Activated T-helper 2 cell treated with anti-CD3 and anti-CD28 coated beads, Interferon-gamma antibody, Interleukin-2, Interleukin-4, amounts not matched to agents 10 μg/mL and 5 μg/mL and 100 μg/mL, durations not matched to agents 14 hours and 24 hours and 36 hours (primary cell): ENCODE measurements at regions of chr12 and their contacts with region 1.

Region 1: DNA sequence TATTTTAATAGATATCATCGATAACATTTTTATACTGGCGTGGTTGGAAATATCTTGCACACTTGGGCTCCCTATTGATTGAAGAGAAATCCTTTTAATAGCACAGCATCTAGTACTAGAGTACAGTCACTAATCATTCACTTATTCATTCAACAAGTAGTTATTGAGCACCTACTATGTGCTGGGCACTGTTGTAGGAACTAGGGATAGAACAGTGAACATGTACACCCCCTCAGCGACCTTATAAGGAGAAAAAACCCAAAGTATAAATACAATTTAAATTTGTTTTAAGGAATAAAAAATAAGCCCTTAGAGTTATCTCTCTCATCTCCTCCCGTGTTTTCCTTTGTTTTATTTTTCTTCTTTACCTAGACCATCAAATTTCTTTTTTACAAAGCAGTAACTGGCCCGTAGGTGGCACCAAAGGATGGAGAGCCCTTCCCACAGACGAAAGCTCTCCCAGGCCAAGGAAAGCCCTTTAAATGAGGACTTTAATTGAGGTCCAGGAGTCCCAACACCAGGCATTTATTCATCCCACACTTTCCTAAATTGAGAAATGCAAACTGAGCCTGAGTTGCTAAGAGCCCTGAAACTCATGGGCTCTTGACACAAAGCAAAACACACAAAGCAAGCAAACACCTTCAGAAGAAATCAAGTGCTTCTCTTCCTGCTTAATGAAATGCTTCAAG is 29.0 kb downstream of the PEBP1 start:
- DNase-seq: no peak
- H3K4me3 Mint-ChIP-seq: no peak overlapping the region
- H3K27ac Mint-ChIP-seq: peak overlapping the region; percentile 65
- H3K4me1 Mint-ChIP-seq: peaks cover 21% of the 10 kb centered on the region
- H3K27me3 Mint-ChIP-seq: no peaks in the 10 kb centered on the region

Region 2: DNA sequence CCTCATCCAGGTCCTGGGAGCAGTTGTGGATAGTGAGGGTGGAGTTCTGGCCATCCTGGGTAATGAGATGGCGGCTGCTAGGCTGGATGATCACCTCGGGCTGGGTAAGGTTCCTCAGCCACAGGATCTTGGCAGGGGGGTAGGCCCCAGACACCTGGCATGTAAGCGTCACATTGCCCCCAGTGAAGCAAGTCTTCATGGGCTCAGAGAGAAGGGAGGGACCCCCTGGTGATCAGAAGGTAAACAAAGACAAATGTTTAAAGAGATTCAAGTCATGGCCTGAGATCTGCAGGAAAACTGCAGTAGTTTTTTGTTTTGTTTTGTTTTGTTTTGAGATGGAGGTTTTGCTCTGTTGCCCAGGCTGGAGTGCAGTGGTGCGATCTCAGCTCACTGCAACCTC is 91.2 kb before region 1 on chr12:
- intact Hi-C with region 1: no loop called
- DNase-seq: no peak
- H3K4me3 Mint-ChIP-seq: no peak overlapping the region
- H3K27ac Mint-ChIP-seq: no peak overlapping the region
- H3K4me1 Mint-ChIP-seq: peaks cover 2% of the 10 kb centered on the region
- H3K27me3 Mint-ChIP-seq: no peaks in the 10 kb centered on the region

Region 3: GRCh38 chr12:118109088-118109487 is 55.9 kb before region 1 on chr12:
- intact Hi-C with region 1: no loop called
- DNase-seq: no peak
- H3K4me3 Mint-ChIP-seq: no peak overlapping the region
- H3K27ac Mint-ChIP-seq: no peak overlapping the region
- H3K4me1 Mint-ChIP-seq: peaks cover 3% of the 10 kb centered on the region
- H3K27me3 Mint-ChIP-seq: peaks cover 3% of the 10 kb centered on the region

Region 4: DNA sequence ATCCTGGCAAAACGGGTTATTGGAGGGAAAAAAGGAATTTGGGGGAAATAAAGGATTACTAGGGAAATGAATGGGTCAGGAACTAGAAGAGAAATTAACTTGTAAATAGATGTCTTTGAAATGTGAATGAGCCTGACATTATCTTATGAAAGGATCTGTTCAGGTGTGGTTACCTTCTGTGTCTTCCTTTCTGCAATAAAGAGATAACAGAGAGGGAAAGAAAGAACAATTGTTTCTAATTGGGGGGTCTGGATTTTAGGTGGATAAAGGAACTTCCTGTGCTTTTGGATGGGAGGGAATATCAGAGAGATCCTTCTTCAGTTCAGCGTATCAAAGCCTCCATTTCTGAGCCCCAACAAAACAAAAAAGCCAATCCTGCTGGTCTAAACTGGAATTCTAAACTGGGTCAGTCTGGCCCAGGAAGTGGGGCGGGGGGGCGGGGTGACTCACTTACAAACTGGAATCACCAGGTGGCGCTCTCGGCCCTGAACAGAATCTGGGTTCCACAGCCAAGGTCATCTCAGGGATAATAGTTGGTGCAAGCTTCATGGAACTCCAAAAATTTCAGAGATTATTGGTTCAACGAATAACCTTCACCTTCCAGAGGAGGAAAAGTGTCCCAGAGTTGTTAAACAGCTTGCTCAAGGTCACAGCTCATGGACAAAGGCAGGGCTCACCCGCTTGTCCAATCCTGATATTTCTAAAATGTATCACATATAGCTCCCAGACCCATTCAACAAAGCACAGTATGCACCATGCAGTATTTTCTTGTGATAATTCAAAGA is 44.2 kb before region 1 on chr12:
- intact Hi-C with region 1: no loop called
- DNase-seq: peak; percentile 36
- H3K4me3 Mint-ChIP-seq: no peak overlapping the region
- H3K27ac Mint-ChIP-seq: peak overlapping the region; percentile 21
- H3K4me1 Mint-ChIP-seq: peaks cover 8% of the 10 kb centered on the region
- H3K27me3 Mint-ChIP-seq: no peaks in the 10 kb centered on the region

Region 5: DNA sequence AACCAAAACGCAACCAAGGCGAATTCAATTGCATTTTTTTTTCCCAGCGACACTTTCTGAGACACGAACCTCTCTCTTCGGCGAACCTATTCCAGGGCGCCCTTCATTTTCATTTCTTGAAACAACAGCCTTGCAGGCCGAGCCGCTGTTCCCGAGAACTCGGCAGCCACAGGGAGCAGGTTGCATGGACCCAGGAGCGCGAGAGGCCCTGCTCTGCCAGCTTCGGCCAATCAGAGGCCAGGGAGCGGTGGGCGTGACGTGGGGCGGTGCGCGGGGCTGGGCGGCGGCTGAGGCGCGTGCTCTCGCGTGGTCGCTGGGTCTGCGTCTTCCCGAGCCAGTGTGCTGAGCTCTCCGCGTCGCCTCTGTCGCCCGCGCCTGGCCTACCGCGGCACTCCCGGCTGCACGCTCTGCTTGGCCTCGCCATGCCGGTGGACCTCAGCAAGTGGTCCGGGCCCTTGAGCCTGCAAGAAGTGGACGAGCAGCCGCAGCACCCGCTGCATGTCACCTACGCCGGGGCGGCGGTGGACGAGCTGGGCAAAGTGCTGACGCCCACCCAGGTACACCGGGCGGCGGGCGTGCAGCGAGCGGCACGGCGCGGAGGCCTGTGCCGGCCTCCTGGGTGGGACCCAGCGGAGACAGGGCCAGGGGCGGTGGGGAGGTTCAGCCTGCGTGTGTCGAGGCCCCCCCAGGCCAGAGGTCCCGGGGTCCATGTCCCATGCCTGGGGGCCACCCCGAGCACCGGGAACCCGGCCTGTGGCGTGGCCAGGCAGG is 29.0 kb before region 1 on chr12 and contains the start of gene PEBP1:
- intact Hi-C with region 1: loop called (anchors 2 kb)
- DNase-seq: peak; percentile 90
- H3K4me3 Mint-ChIP-seq: peak within 1 kb of the TSS; percentile 99
- H3K27ac Mint-ChIP-seq: peak within 1 kb of the TSS; percentile 89
- H3K4me1 Mint-ChIP-seq: peaks cover 25% of the 10 kb centered on the region
- H3K27me3 Mint-ChIP-seq: no peaks in the 10 kb centered on the region
- total RNA-seq, gene PEBP1: 177 and 184 TPM in 2 replicates

Region 6: DNA sequence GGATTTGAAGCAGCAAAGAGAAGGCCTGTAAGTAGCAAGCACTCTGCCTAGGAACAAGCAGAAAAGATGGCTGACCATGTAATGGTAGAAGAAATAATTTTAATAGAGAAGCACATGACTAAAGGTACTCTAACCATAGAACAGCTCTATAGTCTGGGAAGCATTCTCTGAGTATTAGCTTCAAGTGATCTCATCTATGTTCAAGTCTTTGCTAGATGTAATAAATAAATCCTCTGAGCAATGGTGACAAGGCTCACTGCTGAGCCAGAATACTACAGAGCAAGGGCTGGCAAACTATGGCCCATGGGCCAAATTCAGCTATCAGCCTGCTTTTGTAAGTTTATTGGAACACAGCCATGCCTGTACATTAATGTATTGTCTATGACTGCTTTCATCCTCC is 55.8 kb after region 1 on chr12:
- intact Hi-C with region 1: no loop called
- DNase-seq: no peak
- H3K4me3 Mint-ChIP-seq: no peak overlapping the region
- H3K27ac Mint-ChIP-seq: no peak overlapping the region
- H3K4me1 Mint-ChIP-seq: no peaks in the 10 kb centered on the region
- H3K27me3 Mint-ChIP-seq: no peaks in the 10 kb centered on the region

Region 7: DNA sequence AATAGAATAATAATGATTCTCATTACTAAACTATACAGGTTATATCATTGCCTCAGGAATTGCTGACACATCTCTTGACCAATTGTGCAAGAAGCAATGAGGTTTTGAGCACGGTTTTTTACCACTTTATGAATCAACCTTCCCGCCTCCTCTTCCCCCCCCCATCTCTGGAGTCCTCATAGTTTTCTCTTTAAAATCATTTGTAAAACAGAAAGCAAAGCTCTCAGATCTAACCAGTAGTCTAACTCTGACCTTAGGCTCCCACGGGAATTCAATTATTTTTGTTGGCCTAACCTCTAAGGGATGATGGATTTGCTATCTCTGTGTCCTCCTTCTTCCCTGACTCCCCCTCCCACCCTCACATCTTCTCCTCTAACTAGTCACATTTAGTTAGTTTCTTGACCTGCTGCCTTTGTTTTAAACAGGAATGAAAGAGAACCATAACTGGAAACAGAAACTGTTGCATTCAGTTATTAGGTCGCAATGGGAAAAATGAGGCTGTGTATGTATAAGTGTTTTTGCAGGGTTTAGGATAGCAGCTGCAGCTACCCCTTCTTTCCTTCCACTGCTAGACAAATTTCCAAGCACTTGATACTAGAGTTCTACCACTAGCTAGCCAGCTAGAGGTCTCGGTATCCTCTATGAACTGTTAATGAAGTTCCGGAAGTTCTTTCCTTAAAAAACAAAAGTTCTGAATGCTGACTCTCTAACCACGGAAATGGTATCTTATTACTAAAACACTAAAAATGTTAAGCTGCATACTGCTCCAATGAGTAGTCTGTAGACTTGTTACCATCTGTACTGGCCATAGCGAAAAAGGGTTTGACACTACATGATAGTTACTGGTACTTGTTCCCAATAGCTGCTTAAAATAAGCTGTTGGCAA is 142.4 kb after region 1 on chr12:
- intact Hi-C with region 1: loop called (anchors 5 kb)
- DNase-seq: no peak
- H3K4me3 Mint-ChIP-seq: peak overlapping the region; percentile 73
- H3K27ac Mint-ChIP-seq: peak overlapping the region; percentile 72
- H3K4me1 Mint-ChIP-seq: peaks cover 29% of the 10 kb centered on the region
- H3K27me3 Mint-ChIP-seq: no peaks in the 10 kb centered on the region